CD4-positive, alpha-beta T cell (primary cell): ENCODE measurements at regions of chr19 and their contacts with region 1.

Region 1: DNA sequence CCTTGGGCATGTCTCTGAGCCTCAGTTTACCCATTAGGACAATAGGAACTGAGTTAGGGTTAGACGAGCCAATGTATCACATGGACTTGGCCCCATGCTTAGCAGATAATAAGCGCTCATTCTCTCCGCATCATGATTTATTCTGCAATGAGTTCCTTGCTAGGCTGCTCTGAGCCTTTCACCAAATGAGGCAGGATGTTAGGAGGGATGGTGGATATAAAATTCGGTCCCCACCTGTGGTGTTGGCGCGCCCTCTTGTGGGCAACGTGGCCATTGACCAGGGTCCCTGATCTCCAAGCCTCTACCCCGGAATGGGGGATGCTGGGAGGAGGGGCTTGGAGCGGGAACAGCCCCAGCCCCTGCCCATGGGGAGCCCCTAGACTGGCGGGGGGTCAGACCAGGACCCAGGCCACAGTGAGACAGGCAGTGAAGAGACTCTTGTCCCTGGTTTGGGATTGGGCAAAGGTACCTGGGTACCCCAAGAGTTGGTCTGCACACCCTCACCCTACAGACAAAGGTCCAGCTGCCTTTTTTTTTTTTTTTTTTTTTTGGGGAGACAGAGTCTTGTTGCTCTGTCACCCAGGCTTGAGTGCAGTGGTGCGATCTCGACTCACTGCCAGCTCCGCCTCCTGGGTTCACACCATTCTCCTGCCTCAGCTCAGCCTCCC is 43.9 kb downstream of the CERS4 start:
- DNase-seq: peak; percentile 74 to 91 (median 82)
- ATAC-seq: peak; percentile 95
- H3K4me3 ChIP-seq: no peak overlapping the region
- H3K4me3 Mint-ChIP-seq: no peak overlapping the region
- H3K27ac ChIP-seq: no peak overlapping the region
- H3K27ac Mint-ChIP-seq: no peak overlapping the region
- H3K4me1 ChIP-seq: peaks cover 12% of the 10 kb centered on the region
- H3K4me1 Mint-ChIP-seq: peaks cover 4% of the 10 kb centered on the region
- H3K27me3 ChIP-seq: no peaks in the 10 kb centered on the region
- H3K27me3 Mint-ChIP-seq: no peaks in the 10 kb centered on the region
- CTCF ChIP-seq: peak; percentile 95

Region 2: DNA sequence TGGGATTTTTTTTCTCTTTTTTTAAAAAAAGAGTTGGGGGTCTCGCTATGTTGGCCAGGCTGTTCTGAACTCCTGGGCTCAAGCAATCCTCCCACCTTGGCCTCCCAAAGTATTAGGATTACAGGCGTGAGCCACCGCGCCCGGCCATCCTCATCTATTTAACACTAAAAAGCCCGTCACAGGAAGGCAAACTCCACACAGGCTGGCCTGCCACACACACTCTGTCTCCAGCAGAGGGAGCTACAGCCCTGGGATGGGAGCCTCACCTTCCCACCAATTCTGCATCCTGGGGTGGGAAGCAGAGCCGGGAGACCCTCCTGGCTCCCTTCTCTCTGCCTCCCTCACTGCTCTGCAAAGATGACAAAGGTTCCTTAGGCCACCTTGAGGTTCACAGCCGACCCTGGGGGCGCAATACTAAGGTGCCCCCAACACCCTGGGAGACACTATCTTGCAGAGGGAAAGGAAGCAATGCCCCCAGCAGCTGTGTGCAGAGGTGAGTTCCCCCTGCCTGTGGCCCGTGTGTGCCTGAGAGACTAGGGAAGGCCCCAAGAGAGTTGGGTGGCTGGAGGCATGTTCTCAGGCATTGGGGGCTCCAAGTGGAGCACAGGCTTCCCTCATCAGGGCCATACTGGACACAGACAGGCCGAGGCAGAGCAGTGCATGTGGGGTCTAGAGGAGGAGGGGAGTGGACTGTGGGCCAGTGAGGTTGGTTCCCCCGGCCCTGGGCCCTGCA is 282.2 kb before region 1 on chr19:
- CTCF ChIA-PET with region 1: no interaction called
- POLR2A ChIA-PET with region 1: no interaction called
- intact Hi-C with region 1: loop called in 1 of 2 experiments (anchors 10 kb)
- DNase-seq: peak in 5 of 14 experiments; percentile 6 to 51 (median 29)
- ATAC-seq: peak; percentile 29
- H3K4me3 ChIP-seq: no peak overlapping the region
- H3K4me3 Mint-ChIP-seq: no peak overlapping the region
- H3K27ac ChIP-seq: no peak overlapping the region
- H3K27ac Mint-ChIP-seq: no peak overlapping the region
- H3K4me1 ChIP-seq: no peaks in the 10 kb centered on the region
- H3K4me1 Mint-ChIP-seq: no peaks in the 10 kb centered on the region
- H3K27me3 ChIP-seq: no peaks in the 10 kb centered on the region
- H3K27me3 Mint-ChIP-seq: no peaks in the 10 kb centered on the region
- CTCF ChIP-seq: peak; percentile 62

Region 3: GRCh38 chr19:8017808-8018207 is 235.2 kb before region 1 on chr19:
- CTCF ChIA-PET with region 1: no interaction called
- POLR2A ChIA-PET with region 1: interaction called, 3 read pairs
- intact Hi-C with region 1: loop called (anchors 5 kb)
- DNase-seq: peak in 11 of 14 experiments; percentile 9 to 70 (median 39)
- ATAC-seq: peak; percentile 96
- H3K4me3 ChIP-seq: no peak overlapping the region
- H3K4me3 Mint-ChIP-seq: no peak overlapping the region
- H3K27ac ChIP-seq: no peak overlapping the region
- H3K27ac Mint-ChIP-seq: no peak overlapping the region
- H3K4me1 ChIP-seq: peaks cover 8% of the 10 kb centered on the region
- H3K4me1 Mint-ChIP-seq: peaks cover 6% of the 10 kb centered on the region
- H3K27me3 ChIP-seq: no peaks in the 10 kb centered on the region
- H3K27me3 Mint-ChIP-seq: no peaks in the 10 kb centered on the region
- CTCF ChIP-seq: no peak

Region 4: GRCh38 chr19:8158411-8159074 is 94.5 kb before region 1 on chr19:
- CTCF ChIA-PET with region 1: interaction called, 7 read pairs
- POLR2A ChIA-PET with region 1: no interaction called
- intact Hi-C with region 1: loop called (anchors 1 kb)
- DNase-seq: peak in 11 of 14 experiments; percentile 9 to 85 (median 36)
- ATAC-seq: peak; percentile 57
- H3K4me3 ChIP-seq: no peak overlapping the region
- H3K4me3 Mint-ChIP-seq: no peak overlapping the region
- H3K27ac ChIP-seq: no peak overlapping the region
- H3K27ac Mint-ChIP-seq: no peak overlapping the region
- H3K4me1 ChIP-seq: no peaks in the 10 kb centered on the region
- H3K4me1 Mint-ChIP-seq: no peaks in the 10 kb centered on the region
- H3K27me3 ChIP-seq: peaks cover 9 to 10% of the 10 kb centered on the region in 2 experiments
- H3K27me3 Mint-ChIP-seq: peaks cover 24% of the 10 kb centered on the region
- CTCF ChIP-seq: peak; percentile 75